H1 (cell line): ENCODE measurements at regions of chr17 and their contacts with region 1.

Region 1: GRCh38 chr17:36629252-36629847 is 28.0 kb downstream of the MRM1 start:
- DNase-seq: peak; percentile 64 to 99
- H3K4me3 ChIP-seq: no peak overlapping the region
- H3K27ac ChIP-seq: no peak overlapping the region
- H3K4me1 ChIP-seq: peaks cover 2 to 28% (median 11%) of the 10 kb centered on the region in 4 experiments; a peak in 6 of 7 replicates
- H3K27me3 ChIP-seq: no peaks in the 10 kb centered on the region; a peak in 1 of 7 replicates
- CTCF ChIP-seq: peak; percentile 98 to 99 (median 99)
- EP300 ChIP-seq: no peak
- POLR2A ChIP-seq: no peak
- RAD21 ChIP-seq: peak; percentile 100

Region 2: DNA sequence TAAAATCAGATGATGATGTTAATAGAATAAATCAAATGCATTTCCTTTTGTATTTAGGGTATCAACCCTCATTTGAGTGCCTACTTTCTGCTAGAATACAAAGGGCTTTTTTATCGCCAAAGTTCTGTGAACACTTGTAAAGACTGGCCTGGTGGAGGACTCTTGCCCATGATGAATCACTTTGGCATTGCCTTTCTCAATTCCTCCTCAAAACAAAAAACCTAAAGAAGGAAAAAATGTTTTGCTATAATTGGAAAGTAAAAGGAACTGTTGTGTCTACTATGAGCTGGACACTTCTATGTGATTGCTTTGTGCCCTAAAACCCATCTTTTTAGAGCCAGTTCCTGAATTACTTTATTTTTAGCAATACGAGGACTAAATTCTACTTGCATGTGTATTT is 50.7 kb before region 1 on chr17:
- CTCF ChIA-PET with region 1: no interaction called
- POLR2A ChIA-PET with region 1: no interaction called
- DNase-seq: no peak
- H3K4me3 ChIP-seq: no peak overlapping the region
- H3K27ac ChIP-seq: no peak overlapping the region
- H3K4me1 ChIP-seq: no peaks in the 10 kb centered on the region
- H3K27me3 ChIP-seq: no peaks in the 10 kb centered on the region
- CTCF ChIP-seq: no peak
- EP300 ChIP-seq: no peak
- POLR2A ChIP-seq: no peak
- RAD21 ChIP-seq: no peak

Region 3: GRCh38 chr17:36601303-36602029 is 27.9 kb before region 1 on chr17 and contains the start of gene MRM1:
- CTCF ChIA-PET with region 1: interaction called, 35 read pairs
- POLR2A ChIA-PET with region 1: interaction called, 5 read pairs
- DNase-seq: peak; percentile 90 to 93
- H3K4me3 ChIP-seq: peak within 1 kb of the TSS; percentile 75 to 94 (median 86)
- H3K27ac ChIP-seq: peak within 1 kb of the TSS; percentile 57; the same call in 1 of the 2 replicates
- H3K4me1 ChIP-seq: peaks cover 3 to 15% (median 9%) of the 10 kb centered on the region in 4 experiments
- H3K27me3 ChIP-seq: no peaks in the 10 kb centered on the region
- CTCF ChIP-seq: no peak; a peak in 1 of 4 replicates
- EP300 ChIP-seq: no peak
- POLR2A ChIP-seq: peak; percentile 34 to 84
- RAD21 ChIP-seq: no peak
- total RNA-seq, gene MRM1: 11.2 and 11.7 TPM in 2 replicates

Region 4: GRCh38 chr17:36641877-36642845 is 12.8 kb after region 1 on chr17:
- CTCF ChIA-PET with region 1: interaction called, 48 read pairs
- POLR2A ChIA-PET with region 1: interaction called, 3 read pairs
- DNase-seq: no peak
- H3K4me3 ChIP-seq: peak overlapping the region; percentile 37 to 70 (median 65)
- H3K27ac ChIP-seq: no peak overlapping the region
- H3K4me1 ChIP-seq: peaks cover 0 to 6% (median 2%) of the 10 kb centered on the region in 4 experiments; a peak in 6 of 7 replicates
- H3K27me3 ChIP-seq: peaks cover 19 to 47% (median 45%) of the 10 kb centered on the region in 4 experiments
- CTCF ChIP-seq: no peak
- EP300 ChIP-seq: no peak
- POLR2A ChIP-seq: no peak
- RAD21 ChIP-seq: no peak

Region 5: DNA sequence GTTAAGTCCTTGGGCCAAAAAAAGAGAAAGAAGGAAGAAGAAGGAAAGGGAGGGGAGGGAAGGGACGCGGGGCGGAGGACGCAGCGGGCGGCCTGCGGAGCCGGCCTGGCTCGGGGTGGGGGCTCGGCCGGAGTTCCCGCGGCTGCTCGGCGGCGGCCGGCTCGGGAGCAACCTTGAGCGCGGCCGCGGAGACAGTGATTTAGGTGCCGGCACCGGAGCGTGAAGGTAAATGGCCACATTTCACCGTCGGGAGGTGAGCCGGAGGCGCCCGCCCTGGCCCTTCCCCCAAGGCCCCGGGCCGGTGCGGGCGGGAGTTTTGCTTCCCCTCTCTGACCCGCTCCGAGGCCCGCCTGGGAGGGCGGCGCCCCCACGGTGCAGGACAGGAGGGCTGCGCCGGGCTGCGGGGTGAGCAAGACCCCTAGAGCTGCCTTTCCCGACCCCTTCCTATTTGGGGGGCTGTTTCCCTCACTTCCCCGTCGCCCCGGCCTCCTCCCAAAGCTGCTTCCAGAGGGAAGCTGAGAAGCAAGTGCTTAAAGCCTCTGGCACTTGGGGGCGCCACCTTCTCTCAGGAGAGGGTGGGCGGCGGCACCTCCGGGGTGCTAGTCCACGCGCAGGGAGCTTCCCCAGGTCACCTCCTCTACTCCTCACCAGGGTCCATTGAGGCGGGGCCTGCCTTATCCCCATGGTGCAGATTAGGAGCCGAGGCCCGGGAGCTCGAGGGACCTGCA is 28.6 kb after region 1 on chr17:
- CTCF ChIA-PET with region 1: interaction called, 86 read pairs
- POLR2A ChIA-PET with region 1: no interaction called
- DNase-seq: peak in 1 of 2 experiments; percentile 86
- H3K4me3 ChIP-seq: peak overlapping the region; percentile 44 to 81 (median 66)
- H3K27ac ChIP-seq: no peak overlapping the region
- H3K4me1 ChIP-seq: peaks cover 0 to 4% (median 3%) of the 10 kb centered on the region in 4 experiments; a peak in 3 of 7 replicates
- H3K27me3 ChIP-seq: peaks cover 0 to 10% (median 3%) of the 10 kb centered on the region in 4 experiments; a peak in 3 of 7 replicates
- CTCF ChIP-seq: peak; percentile 69 to 76 (median 74)
- EP300 ChIP-seq: 0 out of 3 replicates have a peak, but pooled peaks of 1 of the 2 experiments have one; percentile 17
- POLR2A ChIP-seq: no peak
- RAD21 ChIP-seq: peak; percentile 69 to 78

Region 6: GRCh38 chr17:36705874-36706731 is 76.8 kb after region 1 on chr17:
- CTCF ChIA-PET with region 1: interaction called, 48 read pairs
- POLR2A ChIA-PET with region 1: no interaction called
- DNase-seq: no peak
- H3K4me3 ChIP-seq: no peak overlapping the region
- H3K27ac ChIP-seq: no peak overlapping the region
- H3K4me1 ChIP-seq: peaks cover 0 to 8% (median 2%) of the 10 kb centered on the region in 4 experiments; a peak in 2 of 7 replicates
- H3K27me3 ChIP-seq: peaks cover 0 to 15% (median 7%) of the 10 kb centered on the region in 4 experiments; a peak in 6 of 7 replicates
- CTCF ChIP-seq: peak; percentile 81 to 88 (median 82)
- EP300 ChIP-seq: no peak
- POLR2A ChIP-seq: no peak
- RAD21 ChIP-seq: peak; percentile 81 to 88

Region 7: GRCh38 chr17:36920565-36921005 is 291.2 kb after region 1 on chr17:
- CTCF ChIA-PET with region 1: interaction called, 13 read pairs
- POLR2A ChIA-PET with region 1: no interaction called
- DNase-seq: no peak
- H3K4me3 ChIP-seq: peak overlapping the region in 1 of 4 experiments; percentile 27; a peak in 1 of 8 replicates
- H3K27ac ChIP-seq: no peak overlapping the region
- H3K4me1 ChIP-seq: peaks cover 0 to 37% (median 25%) of the 10 kb centered on the region in 4 experiments; a peak in 6 of 7 replicates
- H3K27me3 ChIP-seq: peaks cover 0 to 5% (median under 1%) of the 10 kb centered on the region in 4 experiments; a peak in 4 of 7 replicates
- CTCF ChIP-seq: no peak
- EP300 ChIP-seq: no peak
- POLR2A ChIP-seq: no peak
- RAD21 ChIP-seq: no peak